Right ventricle myocardium inferior (tissue), 1 donor: ENCODE measurements at regions of chr2 and their contacts with region 1.

Region 1: DNA sequence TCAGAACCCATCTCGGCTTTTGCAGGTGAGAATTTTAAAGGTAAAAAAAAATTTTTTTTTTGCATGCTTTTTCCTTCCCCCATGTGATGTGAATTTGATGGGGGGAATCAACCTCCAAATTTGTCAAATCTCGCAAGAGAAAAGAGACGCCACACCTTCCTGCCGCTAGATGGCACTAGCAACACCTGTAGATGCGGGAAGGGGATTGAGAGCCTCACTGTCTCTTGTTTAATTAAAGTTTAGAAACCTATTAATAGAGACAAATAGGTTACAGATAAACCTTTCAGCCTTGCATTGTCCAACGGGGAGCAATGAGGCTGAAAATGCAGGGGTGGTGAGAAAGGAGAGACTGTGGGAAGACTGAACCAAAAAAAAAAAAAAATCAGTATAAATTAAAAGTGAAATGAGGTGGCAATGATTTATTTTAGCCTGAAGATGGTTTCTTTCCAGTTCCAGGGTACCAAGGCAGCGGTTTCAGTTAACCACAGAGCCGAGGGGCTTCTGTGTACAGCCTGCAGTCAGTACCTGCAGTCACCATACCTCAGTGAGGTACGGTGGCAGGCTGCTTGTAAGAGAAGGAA is 84.6 kb downstream of the NRP2 start:
- DNase-seq: no peak
- ATAC-seq: no peak

Region 2: DNA sequence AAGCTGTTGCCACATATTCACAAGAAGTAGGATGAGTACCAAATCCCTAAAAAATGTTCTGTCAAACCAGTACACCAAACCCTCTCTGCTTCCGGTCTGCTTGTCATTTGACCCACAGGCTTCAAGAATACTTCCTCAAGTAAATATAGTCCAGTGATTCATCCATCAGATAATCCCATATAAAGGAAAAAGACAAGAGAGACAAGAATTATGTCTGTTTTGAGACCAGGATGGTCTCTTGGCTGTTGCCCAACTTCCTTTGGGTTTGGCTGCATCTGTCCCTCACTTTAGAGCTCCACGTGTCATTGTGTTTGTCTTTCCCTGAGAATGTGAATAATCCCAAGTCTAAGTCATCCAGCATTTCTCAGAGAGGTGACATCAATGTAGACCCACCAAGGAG is 176.1 kb before region 1 on chr2:
- intact Hi-C with region 1: no loop called
- DNase-seq: no peak
- ATAC-seq: no peak

Region 3: DNA sequence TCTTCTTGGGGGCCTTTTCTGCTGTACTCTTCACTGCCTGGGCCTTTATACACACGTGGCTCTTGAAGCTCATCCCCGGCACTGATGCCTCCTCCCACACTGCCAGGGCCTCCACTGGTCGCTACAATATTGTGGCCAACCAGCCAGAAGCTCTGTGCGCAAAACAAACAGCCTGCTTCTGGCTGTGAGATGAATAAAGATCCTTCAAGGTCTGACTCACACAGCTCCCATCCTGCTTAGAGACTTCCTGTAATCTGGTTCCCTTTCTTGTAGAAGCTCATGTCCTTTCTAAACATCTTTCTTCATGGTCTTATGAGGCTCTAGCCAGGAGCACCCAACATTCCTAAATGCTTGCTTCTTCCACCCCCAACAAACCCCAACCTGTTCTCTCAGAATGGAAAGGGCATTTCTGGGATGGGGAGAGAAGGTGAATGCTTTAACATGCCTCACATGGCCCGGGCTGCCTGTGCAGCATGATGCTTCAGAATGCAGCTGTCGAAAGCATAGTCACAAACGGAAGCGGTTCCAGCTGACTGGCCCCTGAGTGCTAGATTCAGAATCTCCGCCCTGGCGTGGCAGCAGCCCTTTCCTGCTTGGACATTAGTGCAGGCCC is 60.0 kb before region 1 on chr2:
- intact Hi-C with region 1: no loop called
- DNase-seq: peak; percentile 83
- ATAC-seq: peak; percentile 81

Region 4: GRCh38 chr2:205885492-205886099 is 118.7 kb after region 1 on chr2:
- intact Hi-C with region 1: loop called (anchors 2 kb)
- DNase-seq: peak; percentile 88
- ATAC-seq: peak; percentile 88

Region 5: DNA sequence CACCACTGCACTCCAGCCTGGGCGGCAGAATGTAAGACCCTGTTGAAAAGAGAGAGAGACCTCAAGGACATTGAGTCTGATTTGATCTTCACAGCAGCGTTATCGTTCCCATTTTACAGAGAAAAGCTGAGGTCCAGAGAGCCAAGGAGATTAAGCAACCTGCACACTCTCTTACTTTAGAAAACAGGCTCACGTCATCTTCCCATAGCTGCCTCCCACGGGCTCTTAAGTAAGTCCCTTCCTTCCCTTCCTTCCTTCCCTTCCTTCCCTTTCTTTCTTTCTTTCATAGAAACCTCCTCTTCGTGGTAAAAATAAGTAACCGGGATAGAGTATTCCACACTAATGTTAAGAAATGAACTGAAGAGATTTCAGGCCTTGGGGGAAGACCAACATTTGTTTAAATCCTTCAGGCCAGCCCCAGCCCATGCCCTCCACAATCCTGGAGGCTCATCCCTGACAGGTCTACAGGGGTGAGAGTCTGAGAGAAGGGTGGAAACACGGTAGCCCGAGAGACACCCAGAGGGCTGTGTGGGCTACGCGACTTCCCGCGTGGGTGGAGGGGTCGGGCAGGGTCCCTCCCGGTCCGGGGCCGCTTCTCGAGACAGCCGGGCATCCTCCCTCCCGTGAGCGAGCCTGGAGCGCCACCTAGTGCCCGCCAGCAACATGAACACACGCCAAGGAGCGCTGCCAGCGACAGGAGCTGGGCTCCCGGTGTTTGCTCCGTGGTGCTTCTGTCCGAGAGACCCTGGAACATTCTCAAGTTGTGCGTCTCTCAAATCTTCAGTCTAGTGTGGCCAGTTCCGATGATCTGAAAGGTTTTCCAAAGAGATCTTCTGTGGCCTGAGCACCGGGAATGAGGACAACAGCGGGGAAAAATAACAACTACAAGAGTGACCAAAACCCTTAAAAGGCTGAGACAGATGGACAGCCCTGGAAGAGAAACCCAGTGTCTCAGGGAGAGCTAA is 158.8 kb after region 1 on chr2:
- intact Hi-C with region 1: loop called (anchors 2 kb)
- DNase-seq: peak; percentile 91
- ATAC-seq: peak; percentile 91

Region 6: DNA sequence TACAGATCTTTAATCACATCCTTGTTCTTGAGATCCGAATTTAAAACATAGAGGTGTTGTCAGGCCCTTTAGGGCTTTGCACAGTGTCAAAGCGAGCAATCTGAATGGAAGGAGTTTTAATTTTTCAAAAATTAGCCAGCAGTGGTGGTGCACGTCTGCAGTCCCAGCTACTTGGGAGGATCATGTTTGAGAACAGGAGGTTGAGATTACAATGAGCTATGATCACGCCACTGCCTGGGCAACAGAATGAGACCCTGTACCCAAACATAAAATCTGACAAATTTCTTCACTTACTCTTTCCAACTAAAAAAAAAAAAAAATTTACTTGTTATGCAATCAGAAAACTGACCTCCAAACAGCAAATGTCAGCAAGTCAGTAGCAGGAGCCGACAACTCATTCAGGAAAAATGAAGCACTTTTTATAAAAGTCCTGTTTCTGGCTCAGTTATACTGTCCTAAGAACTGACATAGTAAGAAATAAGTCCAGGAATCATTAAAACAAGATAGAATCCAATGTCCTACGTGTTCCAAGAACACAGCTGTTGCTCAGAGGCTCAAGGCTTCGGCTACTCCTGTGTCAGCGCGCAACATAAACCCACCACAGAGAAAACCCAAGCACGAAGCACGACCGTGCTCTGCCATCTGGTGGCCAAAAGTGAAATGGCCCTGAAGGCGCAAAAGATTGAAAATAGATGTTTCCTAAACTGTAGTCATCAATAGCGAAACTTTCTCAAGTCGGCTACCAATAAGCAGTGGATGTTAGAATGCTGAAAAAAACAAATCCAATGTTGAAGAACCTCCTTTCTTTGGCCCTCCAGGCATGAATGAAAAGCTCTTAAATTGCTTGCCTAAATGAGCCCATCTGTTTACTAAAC is 181.0 kb after region 1 on chr2:
- intact Hi-C with region 1: loop called (anchors 5 kb)
- DNase-seq: peak; percentile 76
- ATAC-seq: peak; percentile 92

Region 7: DNA sequence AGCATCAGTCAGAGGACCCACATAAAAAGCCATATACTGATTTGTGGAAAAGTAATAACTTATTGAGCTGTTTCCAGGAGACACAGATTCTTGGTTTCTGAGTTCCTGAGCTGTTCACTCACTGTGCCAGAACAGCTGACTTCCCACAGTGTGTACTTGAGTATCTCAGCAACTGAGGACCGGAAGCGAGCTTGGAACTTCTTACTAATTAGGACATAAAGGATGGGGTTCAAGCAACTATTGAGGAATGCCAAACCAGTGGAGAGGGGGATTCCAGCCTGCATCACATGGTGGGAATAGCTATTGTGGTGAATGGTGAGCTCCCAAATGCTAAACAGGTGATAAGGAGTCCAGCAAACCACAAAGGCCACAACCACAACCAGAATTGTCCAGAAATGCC is 409.3 kb after region 1 on chr2:
- intact Hi-C with region 1: no loop called
- DNase-seq: no peak
- ATAC-seq: no peak